Naive thymus-derived CD8-positive, alpha-beta T cell (primary cell): ENCODE measurements at regions of chr20 and their contacts with region 1.

Region 1: DNA sequence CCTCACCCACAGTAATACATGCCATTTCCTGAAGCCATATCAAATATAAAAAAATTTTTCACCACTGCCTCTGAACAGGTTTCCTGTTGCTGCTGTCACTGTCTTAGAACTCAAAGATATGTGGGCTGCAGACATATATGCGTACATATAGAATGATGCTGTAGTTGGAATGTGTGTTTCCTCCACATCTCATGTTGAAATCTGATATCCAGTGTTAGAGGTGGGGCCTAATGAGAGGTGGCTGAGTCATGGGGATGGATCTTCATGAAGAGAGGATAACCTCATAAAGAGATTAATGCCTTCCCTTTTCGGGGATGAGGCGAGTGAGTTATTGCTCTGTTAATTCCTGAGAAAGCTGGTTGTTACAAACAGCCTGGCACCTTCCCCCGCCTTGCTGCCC is 7.7 kb upstream of the SCP2D1 start:
- DNase-seq: peak in 6 of 10 donors; percentile 27 to 70 (median 56)
- ATAC-seq: peak; percentile 87 to 94
- H3K4me3 Mint-ChIP-seq: peak overlapping the region in 8 of 10 donors; percentile 18 to 66 (median 56)
- H3K27ac Mint-ChIP-seq: peak overlapping the region; percentile 86 to 98 (median 94)
- H3K4me1 Mint-ChIP-seq: peaks cover 10 to 34% (median 19%) of the 10 kb centered on the region in 4 donors
- H3K27me3 Mint-ChIP-seq: peaks cover 0 to 3% (median 0%) of the 10 kb centered on the region in 5 donors

Region 2: GRCh38 chr20:18739751-18740166 is 66.1 kb before region 1 on chr20:
- POLR2A ChIA-PET with region 1: no interaction called
- DNase-seq: no peak
- ATAC-seq: no peak
- H3K4me3 Mint-ChIP-seq: no peak overlapping the region
- H3K27ac Mint-ChIP-seq: peak overlapping the region in 2 of 10 donors; percentile 29 to 62
- H3K4me1 Mint-ChIP-seq: peaks cover 12 to 32% (median 21%) of the 10 kb centered on the region in 4 donors
- H3K27me3 Mint-ChIP-seq: no peaks in the 10 kb centered on the region

Region 3: DNA sequence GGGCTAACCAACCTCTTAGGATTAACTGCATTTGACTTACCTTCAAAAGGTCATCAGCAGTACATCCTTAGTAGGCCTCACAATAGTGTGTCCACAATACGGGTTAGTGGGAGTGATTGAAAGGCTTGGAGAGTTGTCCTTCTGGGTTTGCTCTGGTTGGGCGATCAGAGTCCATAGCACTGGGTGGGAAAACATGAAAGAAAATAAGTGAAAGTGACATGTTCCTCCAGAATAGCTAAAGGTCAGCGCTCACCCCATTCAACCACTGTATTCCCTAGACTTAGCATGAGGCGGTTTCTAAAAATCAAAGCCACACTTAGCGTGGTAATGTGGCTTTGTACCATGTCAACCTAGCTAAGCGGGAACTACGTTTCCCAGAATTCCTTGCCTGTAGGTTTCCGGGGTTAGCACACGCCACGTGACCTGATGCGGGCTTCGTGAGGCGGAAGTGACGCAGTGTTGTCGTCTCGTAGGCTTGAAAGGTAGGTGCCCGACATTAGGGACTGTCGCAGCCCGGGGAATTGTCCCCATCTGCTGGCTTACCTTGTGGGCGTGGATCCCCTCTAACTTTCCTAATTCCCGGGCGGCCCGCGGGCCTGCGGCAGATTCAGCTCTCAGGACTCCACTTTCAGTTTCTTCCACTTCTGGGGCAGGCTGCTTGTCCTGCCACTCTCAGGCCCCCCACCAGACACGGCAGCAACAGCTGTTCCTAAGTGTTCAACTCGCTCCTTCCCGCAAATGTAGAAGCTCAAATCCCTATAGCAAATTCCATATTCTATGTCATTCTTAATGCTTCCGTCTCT is 12.1 kb before region 1 on chr20:
- POLR2A ChIA-PET with region 1: interaction called, 15 read pairs
- DNase-seq: peak; percentile 70 to 96 (median 88)
- ATAC-seq: peak; percentile 96 to 98
- H3K4me3 Mint-ChIP-seq: peak overlapping the region; percentile 89 to 98 (median 96)
- H3K27ac Mint-ChIP-seq: peak overlapping the region; percentile 98 to 100 (median 100)
- H3K4me1 Mint-ChIP-seq: peaks cover 7 to 22% (median 15%) of the 10 kb centered on the region in 4 donors
- H3K27me3 Mint-ChIP-seq: peaks cover 10 to 32% (median 16%) of the 10 kb centered on the region in 5 donors

Region 4: DNA sequence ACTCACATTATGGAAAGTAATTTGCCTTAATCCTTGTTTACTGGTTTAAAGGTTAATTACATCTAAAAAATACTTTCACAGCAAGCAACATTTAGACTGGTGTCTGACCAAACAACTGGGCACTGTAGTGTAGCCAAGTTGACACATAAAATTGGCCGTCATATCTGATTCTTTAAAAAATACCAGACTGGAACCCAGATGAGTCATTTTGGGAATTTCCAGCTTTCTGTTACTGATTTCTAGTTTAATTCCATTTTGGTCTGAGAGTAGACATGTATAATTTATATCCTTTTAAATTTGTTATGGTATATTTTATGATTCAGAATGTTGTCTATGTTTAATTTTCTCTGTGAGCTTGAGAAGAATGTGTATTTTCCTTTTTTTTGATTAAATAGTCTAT is 51.8 kb after region 1 on chr20:
- POLR2A ChIA-PET with region 1: no interaction called
- DNase-seq: no peak
- ATAC-seq: no peak
- H3K4me3 Mint-ChIP-seq: no peak overlapping the region
- H3K27ac Mint-ChIP-seq: no peak overlapping the region
- H3K4me1 Mint-ChIP-seq: no peaks in the 10 kb centered on the region
- H3K27me3 Mint-ChIP-seq: peaks cover 3 to 23% (median 7%) of the 10 kb centered on the region in 5 donors